AG04449 (cell line): ENCODE measurements at regions of chr2 and their contacts with region 1.

Region 1: GRCh38 chr2:178112202-178113152 is at the start of gene RBM45:
- DNase-seq: peak; percentile 38
- H3K4me3 ChIP-seq: peak within 1 kb of the TSS; percentile 74
- CTCF ChIP-seq: peak; percentile 98

Region 2: GRCh38 chr2:177641331-177641730 is 471.1 kb before region 1 on chr2:
- CTCF ChIA-PET with region 1: no interaction called
- POLR2A ChIA-PET with region 1: no interaction called
- DNase-seq: no peak
- H3K4me3 ChIP-seq: no peak overlapping the region
- CTCF ChIP-seq: no peak

Region 3: DNA sequence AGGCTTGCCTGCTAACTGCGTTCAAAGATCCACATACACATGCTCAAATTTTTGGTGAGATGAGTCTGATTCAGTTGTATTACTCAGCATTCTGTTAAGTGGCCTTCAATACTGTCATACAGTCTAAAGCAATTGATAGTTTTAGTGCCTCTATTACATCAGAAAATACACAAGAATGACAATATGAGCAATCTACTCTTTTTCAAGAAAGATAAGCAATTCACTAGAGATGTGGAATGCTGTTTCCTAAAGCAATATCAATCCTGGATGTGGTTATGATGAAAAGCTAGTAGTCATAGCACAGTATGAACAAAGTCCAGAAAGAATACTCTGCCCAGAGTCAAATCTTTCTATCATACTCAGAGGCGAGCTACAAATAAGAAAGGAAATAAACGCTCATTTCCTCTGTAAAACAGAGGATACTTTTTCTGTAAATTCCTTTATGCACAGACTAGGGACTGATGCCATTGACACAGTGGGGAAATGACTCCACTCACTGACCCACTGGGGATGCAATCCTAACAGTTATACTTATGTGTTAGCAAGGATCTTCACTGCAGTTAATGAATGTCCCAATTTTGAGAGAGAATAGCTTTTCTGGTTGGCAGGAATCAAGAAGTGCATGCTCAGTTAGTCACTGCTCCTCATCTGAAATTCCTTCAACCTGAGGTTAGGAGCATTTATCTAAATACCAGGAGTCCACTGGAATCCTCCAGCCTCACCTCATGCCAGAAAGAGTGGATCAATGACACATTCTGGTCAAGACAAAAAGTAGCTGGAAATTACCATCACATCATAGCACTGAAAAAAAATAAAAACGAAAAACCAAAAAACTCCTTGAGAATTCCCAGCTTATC is 123.2 kb before region 1 on chr2:
- CTCF ChIA-PET with region 1: interaction called, 113 read pairs
- POLR2A ChIA-PET with region 1: interaction called, 3 read pairs
- DNase-seq: no peak
- H3K4me3 ChIP-seq: no peak overlapping the region
- CTCF ChIP-seq: no peak

Region 4: GRCh38 chr2:178084273-178084672 is 28.2 kb before region 1 on chr2:
- CTCF ChIA-PET with region 1: interaction called, 10 read pairs
- POLR2A ChIA-PET with region 1: no interaction called
- DNase-seq: no peak
- H3K4me3 ChIP-seq: no peak overlapping the region
- CTCF ChIP-seq: no peak

Region 5: DNA sequence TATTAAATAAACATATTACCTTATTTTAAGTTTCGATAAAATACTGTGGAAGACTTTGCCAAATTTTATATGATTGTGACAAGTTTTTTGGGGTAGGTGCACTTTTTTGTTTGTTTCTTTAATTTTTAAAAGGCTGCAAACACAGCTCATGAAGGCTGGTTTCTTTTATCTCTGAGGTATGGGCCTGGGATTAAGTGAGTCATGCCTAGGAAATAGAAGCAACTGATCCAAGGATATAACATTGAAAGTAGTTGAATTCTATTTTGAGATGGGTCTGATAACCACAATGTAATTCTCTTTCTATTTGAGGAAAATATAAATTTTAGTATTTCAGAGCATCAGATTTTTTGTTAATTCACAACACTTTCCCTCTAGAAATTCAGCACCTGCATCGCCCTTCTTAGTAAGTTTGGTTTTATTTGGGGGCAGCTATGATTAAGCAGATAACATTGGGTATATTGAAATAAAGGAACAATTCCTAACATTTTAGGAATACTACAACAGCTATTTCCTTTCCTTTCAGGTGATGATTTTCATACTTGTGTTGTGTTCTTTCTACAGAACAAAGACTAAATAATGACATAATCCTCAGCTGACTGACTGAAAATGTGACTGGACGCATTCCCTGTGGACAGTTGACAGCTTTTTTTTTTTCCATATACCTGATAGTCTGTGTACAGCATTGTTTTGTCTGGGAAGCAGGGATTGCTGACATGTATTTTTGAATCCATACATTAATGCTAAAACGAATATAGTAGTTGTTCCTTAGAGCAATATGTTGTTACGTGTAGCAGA is 16.6 kb after region 1 on chr2:
- CTCF ChIA-PET with region 1: interaction called, 91 read pairs
- POLR2A ChIA-PET with region 1: no interaction called
- DNase-seq: no peak
- H3K4me3 ChIP-seq: no peak overlapping the region
- CTCF ChIP-seq: no peak

Region 6: GRCh38 chr2:178238144-178238521 is 125.7 kb after region 1 on chr2:
- CTCF ChIA-PET with region 1: no interaction called
- POLR2A ChIA-PET with region 1: no interaction called
- DNase-seq: no peak
- H3K4me3 ChIP-seq: no peak overlapping the region
- CTCF ChIP-seq: no peak

Region 7: DNA sequence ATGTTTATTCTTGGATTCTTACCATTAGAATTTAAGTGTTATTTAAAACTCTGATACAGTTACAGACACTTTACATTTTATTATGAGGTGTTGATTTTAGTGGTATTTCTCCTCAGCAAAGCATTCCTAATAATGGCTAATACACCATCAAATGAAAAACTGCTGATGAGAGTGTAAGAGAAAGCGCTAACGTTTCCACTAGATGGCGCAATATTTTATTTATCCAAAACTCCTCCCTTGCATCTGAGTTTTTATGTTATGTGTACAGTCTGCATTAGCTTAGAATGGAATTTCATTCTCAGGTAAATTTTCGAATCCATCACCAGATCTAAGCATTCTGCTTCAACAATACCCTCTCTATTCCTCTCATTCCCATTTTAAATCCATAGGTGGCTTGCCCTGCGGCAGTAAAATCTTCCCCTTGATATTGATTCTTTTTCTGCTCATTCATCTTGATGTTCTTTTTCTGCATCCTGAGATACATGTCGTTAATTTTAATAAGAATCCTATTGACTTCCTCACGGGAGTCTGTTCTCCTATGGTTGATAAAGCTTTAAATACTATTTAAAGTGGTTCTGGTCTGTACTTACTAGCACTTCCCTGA is 284.6 kb after region 1 on chr2:
- CTCF ChIA-PET with region 1: interaction called, 10 read pairs
- POLR2A ChIA-PET with region 1: no interaction called
- DNase-seq: no peak
- H3K4me3 ChIP-seq: no peak overlapping the region
- CTCF ChIP-seq: peak; percentile 42

Region 8: DNA sequence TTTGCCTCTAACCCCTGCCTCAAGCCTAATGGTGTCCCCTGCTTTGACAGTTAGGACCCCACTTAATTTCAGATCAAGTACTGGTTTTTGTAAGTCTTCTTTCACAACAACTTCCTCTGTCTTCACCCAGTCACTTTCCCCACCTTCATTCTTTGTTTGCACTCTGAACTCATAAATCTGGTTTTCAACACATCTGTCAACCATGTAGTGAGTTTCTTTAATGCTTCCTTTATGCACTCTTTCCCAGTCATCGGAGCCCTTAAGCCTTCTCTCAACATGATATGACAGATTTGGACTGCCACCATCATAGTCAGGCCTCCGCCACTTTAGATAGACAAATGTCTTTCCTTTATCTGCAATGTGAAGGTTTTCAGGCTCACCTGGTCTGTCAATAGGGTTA is 476.9 kb after region 1 on chr2:
- CTCF ChIA-PET with region 1: no interaction called
- POLR2A ChIA-PET with region 1: no interaction called
- DNase-seq: no peak
- H3K4me3 ChIP-seq: no peak overlapping the region
- CTCF ChIP-seq: no peak